ENCODE measurements at regions of chr5 and their contacts with region 1.

Region 1: GRCh38 chr5:135214897-135215616 is 181.0 kb upstream of the PITX1 start:
- DNase-seq: no peak
- H3K4me3 ChIP-seq: no peak overlapping the region
- H3K27ac ChIP-seq: no peak overlapping the region
- H3K4me1 ChIP-seq: no peaks in the 10 kb centered on the region
- CTCF ChIP-seq: no peak

Region 2: DNA sequence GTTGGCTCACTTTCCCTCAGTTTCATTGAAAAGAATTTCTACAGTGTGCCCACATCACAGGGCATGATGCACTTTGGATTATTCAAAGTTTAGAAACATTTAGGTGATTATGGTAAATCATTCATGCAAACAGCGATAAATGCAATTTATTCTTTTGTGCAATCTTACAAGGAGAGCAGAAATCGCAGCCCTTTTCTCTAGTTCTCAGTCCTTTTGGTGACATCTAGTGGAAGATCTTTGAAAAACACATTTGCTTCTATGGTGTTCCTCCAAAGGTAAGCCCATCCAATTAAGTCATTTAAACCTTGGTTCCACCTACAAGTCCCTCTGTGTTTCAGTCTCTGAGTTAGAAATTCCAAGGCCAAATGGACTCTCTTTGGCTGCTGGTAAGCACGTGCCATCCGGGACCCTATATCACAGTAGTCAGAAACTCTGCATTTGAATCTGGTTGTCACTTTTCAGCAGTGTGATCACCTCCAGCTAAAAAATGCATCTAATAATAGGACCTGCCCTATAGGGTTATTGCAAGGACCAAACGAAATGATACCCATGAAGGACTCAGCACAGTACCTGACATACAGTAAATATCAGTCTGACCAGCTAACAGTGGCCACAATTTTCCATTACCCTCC is 117.6 kb after region 1 on chr5:
- CTCF ChIA-PET with region 1: no interaction called
- POLR2A ChIA-PET with region 1: no interaction called
- intact Hi-C with region 1: loop called (anchors 5 kb)
- DNase-seq: peak; percentile 56
- H3K4me3 ChIP-seq: no peak overlapping the region
- H3K27ac ChIP-seq: no peak overlapping the region
- H3K4me1 ChIP-seq: no peaks in the 10 kb centered on the region
- CTCF ChIP-seq: peak; percentile 83

Measured in OCI-LY7 (cell line).